ENCODE measurements at regions of chr4 and their contacts with region 1.

Region 1: GRCh38 chr4:69095301-69095731 is 958 bp upstream of the UGT2B7 start:
- DNase-seq: peak; percentile 96
- ATAC-seq: peak; percentile 86
- H3K4me3 ChIP-seq: 0 out of 2 replicates have a peak overlapping the region, but pooled peaks have one; percentile 9
- H3K27ac ChIP-seq: peak overlapping the region; percentile 89
- H3K4me1 ChIP-seq: peaks cover 59% of the 10 kb centered on the region
- H3K27me3 ChIP-seq: no peaks in the 10 kb centered on the region
- CTCF ChIP-seq: no peak

Region 2: DNA sequence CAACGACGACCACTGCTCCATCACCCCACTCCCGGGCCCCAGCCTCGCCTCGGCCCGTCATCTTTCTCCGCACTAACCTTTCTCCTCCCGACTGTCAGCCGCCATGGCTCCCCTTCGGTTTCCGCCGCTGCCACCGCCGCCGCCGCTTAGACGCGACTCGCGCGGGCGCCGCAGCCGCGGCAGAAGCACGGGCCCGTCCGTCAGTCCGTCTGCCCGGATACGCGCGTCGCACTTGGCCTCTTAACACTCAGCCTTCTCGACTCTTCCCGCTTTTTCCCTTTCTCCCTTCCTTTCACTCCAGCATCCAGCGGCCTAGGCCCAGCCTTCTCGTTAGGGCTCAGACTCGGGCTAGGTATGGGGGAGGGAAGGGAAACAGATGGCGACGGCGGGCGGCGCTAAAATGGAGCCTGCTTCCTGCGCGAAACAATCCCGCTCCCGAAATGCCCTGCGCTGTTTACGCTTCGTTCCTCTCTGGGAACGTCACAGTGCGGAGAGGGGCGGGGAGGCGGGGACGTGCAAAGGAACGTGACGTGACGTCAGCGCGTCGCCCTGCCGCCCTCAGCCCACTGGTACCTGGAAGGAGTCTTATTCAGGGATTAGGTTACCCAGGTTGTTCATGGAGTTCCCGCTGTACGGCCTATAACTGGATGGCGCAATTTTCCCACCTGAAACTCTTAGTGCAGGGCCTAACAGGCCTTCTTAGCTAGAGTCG is 745.5 kb before region 1 on chr4 and contains the start of gene YTHDC1:
- CTCF ChIA-PET with region 1: no interaction called
- POLR2A ChIA-PET with region 1: no interaction called
- intact Hi-C with region 1: loop called (anchors 10 kb)
- DNase-seq: peak; percentile 99
- ATAC-seq: peak; percentile 87
- H3K4me3 ChIP-seq: peak within 1 kb of the TSS; percentile 93
- H3K27ac ChIP-seq: peak within 1 kb of the TSS; percentile 78
- H3K4me1 ChIP-seq: peaks cover 33% of the 10 kb centered on the region
- H3K27me3 ChIP-seq: no peaks in the 10 kb centered on the region
- CTCF ChIP-seq: 0 out of 2 replicates have a peak, but pooled peaks have one; percentile 9
- total RNA-seq, gene YTHDC1: 47.6 and 55.5 TPM in 2 replicates

Region 3: DNA sequence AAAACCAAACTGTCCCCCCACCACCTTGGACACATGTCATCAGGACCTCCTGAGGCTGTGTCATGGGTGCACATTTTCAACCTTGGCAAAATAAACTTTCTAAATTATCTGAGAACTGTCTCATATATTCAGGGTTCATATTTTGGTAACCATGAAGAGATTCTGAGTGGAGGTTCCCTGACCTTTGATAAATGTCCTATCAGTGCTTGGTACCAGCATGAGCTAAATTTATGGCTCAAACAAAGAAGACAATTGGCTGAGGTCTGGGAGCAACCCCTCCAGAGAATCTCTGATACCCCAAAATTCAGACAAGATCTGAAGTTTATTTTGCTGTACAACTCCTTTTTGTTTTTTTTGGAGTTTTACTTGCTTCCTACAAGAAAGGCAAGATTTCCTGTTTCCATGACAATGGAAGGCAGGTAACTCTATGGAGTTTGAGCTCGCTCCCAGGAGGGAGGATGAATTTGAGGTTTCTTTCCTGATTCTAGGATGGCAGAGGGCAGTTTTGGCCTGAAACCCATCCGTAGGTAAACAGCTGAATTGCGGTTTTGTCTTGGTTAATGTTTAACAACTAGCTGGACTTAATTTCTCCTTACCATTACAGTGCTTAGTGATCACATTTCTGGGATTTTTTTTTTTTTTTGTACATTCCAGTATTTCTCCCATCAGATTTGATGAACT is 439.4 kb before region 1 on chr4:
- CTCF ChIA-PET with region 1: no interaction called
- POLR2A ChIA-PET with region 1: no interaction called
- intact Hi-C with region 1: loop called (anchors 5 kb)
- DNase-seq: peak; percentile 90
- ATAC-seq: peak; percentile 72
- H3K4me3 ChIP-seq: peak overlapping the region; percentile 46
- H3K27ac ChIP-seq: peak overlapping the region; percentile 86
- H3K4me1 ChIP-seq: peaks cover 36% of the 10 kb centered on the region
- H3K27me3 ChIP-seq: no peaks in the 10 kb centered on the region
- CTCF ChIP-seq: no peak

Region 4: DNA sequence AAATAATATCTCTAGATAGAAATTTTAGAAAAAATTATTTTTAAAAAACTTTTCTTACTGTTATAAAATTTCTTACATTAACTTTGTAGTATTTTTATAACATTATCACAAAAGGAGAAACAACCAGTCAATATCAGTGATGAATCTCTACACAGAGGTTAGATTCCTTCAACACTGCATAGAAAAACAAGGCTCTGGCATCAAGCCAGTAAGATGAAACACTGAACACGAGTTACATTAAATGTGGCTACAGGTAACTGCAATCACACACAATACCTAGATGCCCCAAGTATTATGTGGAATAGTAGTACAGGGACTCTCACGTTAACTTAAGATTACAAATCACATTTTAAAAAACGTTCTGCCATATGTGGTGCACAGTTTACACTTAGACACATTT is 274.5 kb before region 1 on chr4:
- CTCF ChIA-PET with region 1: no interaction called
- POLR2A ChIA-PET with region 1: no interaction called
- intact Hi-C with region 1: loop called (anchors 2 kb)
- DNase-seq: peak; percentile 43
- ATAC-seq: no peak
- H3K4me3 ChIP-seq: no peak overlapping the region
- H3K27ac ChIP-seq: no peak overlapping the region
- H3K4me1 ChIP-seq: peaks cover 7% of the 10 kb centered on the region; the same call in 1 of the 2 replicates
- H3K27me3 ChIP-seq: no peaks in the 10 kb centered on the region
- CTCF ChIP-seq: no peak

Region 5: GRCh38 chr4:68912774-68913173 is 182.5 kb before region 1 on chr4:
- CTCF ChIA-PET with region 1: no interaction called
- POLR2A ChIA-PET with region 1: no interaction called
- intact Hi-C with region 1: loop called (anchors 5 kb)
- DNase-seq: peak; percentile 74
- ATAC-seq: peak; percentile 92
- H3K4me3 ChIP-seq: no peak overlapping the region
- H3K27ac ChIP-seq: peak overlapping the region; percentile 26
- H3K4me1 ChIP-seq: peaks cover 14% of the 10 kb centered on the region
- H3K27me3 ChIP-seq: no peaks in the 10 kb centered on the region
- CTCF ChIP-seq: no peak

Region 6: DNA sequence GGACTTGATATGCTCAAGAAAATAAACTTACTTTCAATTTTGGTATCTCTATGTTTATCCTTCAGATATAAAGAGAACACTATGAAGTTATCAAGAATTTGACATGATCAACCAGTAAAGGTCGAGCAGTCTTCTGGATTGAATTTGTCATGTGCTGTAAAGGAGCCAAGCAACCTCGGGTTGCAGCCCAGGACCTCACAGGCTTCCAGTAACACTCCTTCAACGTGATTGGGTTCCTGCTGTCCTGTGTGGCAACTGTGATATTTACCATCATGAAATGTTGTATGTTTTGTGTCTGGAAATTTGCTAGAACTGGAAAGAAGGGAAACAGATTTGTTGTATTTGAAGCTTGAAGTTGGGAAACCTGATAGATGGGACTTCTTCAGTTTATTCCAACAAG is 51.1 kb before region 1 on chr4:
- CTCF ChIA-PET with region 1: no interaction called
- POLR2A ChIA-PET with region 1: interaction called, 3 read pairs
- intact Hi-C with region 1: loop called (anchors 5 kb)
- DNase-seq: no peak
- ATAC-seq: no peak
- H3K4me3 ChIP-seq: no peak overlapping the region
- H3K27ac ChIP-seq: peak overlapping the region; percentile 26; the same call in 1 of the 2 replicates
- H3K4me1 ChIP-seq: peaks cover 4% of the 10 kb centered on the region; the same call in 1 of the 2 replicates
- H3K27me3 ChIP-seq: no peaks in the 10 kb centered on the region
- CTCF ChIP-seq: no peak

Region 7: DNA sequence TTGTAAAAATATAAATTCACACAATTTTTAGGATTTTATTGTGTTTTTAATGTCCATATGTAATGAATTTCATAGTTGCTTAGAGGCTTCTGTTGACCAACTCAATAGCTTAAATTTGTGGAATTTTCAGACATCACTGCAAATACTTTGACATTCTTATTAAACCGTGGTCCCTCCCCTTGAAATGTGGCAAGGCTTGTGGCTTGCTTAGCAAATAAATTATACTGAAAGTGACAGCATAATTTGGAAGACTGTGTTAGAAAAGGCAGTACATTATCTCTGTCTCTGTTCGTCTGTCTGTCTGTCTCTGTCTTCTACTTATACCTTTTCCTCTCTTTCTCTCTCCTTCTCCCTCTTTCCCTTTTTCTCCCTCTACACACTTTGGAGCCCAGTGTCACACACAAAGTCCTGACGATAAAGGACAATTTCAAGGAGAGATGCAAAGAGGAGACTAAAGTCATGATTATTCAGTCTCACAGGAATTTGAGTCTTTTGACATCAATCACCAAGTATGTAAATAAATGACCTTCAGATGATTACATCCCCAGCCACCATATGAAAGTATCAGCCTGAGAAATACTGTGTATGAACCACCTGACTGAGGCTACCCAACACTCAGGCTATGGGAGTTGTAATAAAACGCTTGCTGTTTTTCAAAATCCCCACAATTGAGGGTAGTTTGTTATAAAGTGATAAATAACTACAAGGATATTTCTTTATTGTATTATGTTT is 20.1 kb before region 1 on chr4:
- CTCF ChIA-PET with region 1: no interaction called
- POLR2A ChIA-PET with region 1: no interaction called
- intact Hi-C with region 1: no loop called
- DNase-seq: peak; percentile 23
- ATAC-seq: no peak
- H3K4me3 ChIP-seq: no peak overlapping the region
- H3K27ac ChIP-seq: no peak overlapping the region
- H3K4me1 ChIP-seq: no peaks in the 10 kb centered on the region
- H3K27me3 ChIP-seq: no peaks in the 10 kb centered on the region
- CTCF ChIP-seq: no peak

Region 8: GRCh38 chr4:69167300-69167699 is 72.0 kb after region 1 on chr4:
- CTCF ChIA-PET with region 1: no interaction called
- POLR2A ChIA-PET with region 1: no interaction called
- intact Hi-C with region 1: loop called (anchors 5 kb)
- DNase-seq: no peak
- ATAC-seq: no peak
- H3K4me3 ChIP-seq: no peak overlapping the region
- H3K27ac ChIP-seq: no peak overlapping the region
- H3K4me1 ChIP-seq: no peaks in the 10 kb centered on the region
- H3K27me3 ChIP-seq: no peaks in the 10 kb centered on the region
- CTCF ChIP-seq: no peak

Measured in PC-3 (cell line).